Heart right ventricle (tissue), 16 donors: ENCODE measurements at regions of chr16 and their contacts with region 1.

Region 1: DNA sequence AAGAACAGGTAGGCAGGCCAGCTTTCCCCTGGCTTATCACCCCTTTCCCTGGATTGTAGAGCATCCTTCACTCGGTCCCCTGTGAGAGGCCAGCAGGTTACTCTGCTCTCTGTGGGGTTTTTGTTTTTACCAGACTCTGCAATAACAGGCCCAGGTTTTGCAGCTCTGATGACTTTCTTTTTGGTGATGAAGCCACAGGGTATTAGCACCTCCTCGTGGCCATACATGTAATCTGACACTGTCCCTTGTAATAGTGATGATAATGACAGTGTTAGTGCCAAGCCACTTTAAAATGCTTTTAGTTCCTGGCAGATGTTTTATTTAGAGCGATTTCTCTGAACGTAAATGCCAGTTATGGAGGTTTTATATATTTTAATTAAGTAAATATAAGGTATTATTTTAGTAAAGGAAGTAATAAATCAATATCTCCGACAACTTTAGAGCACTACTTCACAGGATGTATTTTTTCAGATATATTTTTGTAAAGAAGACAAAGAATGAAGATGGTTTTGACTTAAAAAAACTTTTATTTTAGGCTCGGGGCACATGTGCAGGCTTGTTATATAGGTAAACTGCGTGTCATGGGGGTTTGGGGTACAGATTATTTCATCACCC is 38.0 kb upstream of the CPHXL start:
- DNase-seq: peak in 1 of 2 donors; percentile 54
- ATAC-seq: peak in 7 of 8 donors; percentile 64 to 97 (median 89)
- H3K4me3 ChIP-seq: no peak overlapping the region
- H3K27ac ChIP-seq: no peak overlapping the region
- H3K4me1 ChIP-seq: peaks cover 0 to 2% (median 0%) of the 10 kb centered on the region in 9 donors
- H3K27me3 ChIP-seq: no peaks in the 10 kb centered on the region
- CTCF ChIP-seq: peak; percentile 68 to 86 (median 83)

Region 2: DNA sequence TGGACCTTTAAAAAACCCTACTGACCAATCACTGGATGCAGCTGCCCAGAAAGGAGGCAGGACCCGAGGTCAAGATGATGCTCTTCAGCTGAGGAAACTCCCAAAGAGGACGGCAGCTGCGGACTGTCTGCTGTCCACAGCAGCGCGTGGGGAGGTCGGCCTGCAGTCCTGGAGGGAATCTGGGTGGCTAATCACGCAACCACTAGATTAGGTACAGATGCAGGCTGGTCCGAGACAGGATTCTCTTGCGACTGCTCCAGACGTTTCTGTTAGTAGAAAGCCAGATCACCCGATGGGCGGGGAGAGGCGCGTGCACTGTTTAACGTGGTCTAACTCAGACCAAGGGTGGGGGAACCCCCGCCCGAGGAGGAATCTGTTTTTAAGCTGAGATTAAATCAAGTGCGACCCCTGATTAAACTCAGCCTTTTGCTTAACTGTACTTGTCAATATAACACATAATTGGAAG is 566.1 kb before region 1 on chr16:
- intact Hi-C with region 1: loop called in 7 of 10 experiments (anchors 2 to 10 kb)
- DNase-seq: no peak
- ATAC-seq: peak in 5 of 8 donors; percentile 14 to 35 (median 20)
- H3K4me3 ChIP-seq: peak overlapping the region in 1 of 10 donors; percentile 16
- H3K27ac ChIP-seq: no peak overlapping the region
- H3K4me1 ChIP-seq: peaks cover 0 to 12% (median 6%) of the 10 kb centered on the region in 9 donors
- H3K27me3 ChIP-seq: peaks cover 0 to 48% (median 13%) of the 10 kb centered on the region in 7 donors
- CTCF ChIP-seq: no peak

Region 3: DNA sequence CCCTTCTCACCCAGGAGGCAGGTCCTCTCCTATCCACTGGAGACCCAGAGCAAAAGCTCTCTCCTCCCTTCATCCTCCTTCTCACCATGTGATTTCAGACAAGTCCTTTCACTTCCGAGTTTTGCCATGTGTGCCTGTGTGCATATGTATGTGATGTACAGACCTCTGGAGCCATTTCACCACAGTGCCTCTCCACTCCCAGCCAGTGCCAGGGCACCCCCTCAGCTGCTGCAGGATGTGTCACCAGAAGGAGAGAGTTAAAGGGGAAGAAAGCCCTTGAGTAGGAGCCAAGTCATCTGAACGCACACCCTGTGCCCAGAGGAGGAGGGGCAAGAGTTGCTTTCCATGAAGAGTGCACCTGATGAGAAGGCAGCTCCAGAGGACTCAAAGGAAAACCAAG is 286.2 kb before region 1 on chr16:
- intact Hi-C with region 1: loop called in 4 of 10 experiments (anchors 5 to 10 kb)
- DNase-seq: no peak
- ATAC-seq: peak in 1 of 8 donors; percentile 15
- H3K4me3 ChIP-seq: no peak overlapping the region
- H3K27ac ChIP-seq: no peak overlapping the region
- H3K4me1 ChIP-seq: no peaks in the 10 kb centered on the region
- H3K27me3 ChIP-seq: no peaks in the 10 kb centered on the region
- CTCF ChIP-seq: no peak

Region 4: GRCh38 chr16:75527825-75528299 is 236.4 kb before region 1 on chr16:
- intact Hi-C with region 1: no loop called
- DNase-seq: no peak
- ATAC-seq: no peak
- H3K4me3 ChIP-seq: no peak overlapping the region
- H3K27ac ChIP-seq: no peak overlapping the region
- H3K4me1 ChIP-seq: no peaks in the 10 kb centered on the region
- H3K27me3 ChIP-seq: no peaks in the 10 kb centered on the region
- CTCF ChIP-seq: no peak

Region 5: DNA sequence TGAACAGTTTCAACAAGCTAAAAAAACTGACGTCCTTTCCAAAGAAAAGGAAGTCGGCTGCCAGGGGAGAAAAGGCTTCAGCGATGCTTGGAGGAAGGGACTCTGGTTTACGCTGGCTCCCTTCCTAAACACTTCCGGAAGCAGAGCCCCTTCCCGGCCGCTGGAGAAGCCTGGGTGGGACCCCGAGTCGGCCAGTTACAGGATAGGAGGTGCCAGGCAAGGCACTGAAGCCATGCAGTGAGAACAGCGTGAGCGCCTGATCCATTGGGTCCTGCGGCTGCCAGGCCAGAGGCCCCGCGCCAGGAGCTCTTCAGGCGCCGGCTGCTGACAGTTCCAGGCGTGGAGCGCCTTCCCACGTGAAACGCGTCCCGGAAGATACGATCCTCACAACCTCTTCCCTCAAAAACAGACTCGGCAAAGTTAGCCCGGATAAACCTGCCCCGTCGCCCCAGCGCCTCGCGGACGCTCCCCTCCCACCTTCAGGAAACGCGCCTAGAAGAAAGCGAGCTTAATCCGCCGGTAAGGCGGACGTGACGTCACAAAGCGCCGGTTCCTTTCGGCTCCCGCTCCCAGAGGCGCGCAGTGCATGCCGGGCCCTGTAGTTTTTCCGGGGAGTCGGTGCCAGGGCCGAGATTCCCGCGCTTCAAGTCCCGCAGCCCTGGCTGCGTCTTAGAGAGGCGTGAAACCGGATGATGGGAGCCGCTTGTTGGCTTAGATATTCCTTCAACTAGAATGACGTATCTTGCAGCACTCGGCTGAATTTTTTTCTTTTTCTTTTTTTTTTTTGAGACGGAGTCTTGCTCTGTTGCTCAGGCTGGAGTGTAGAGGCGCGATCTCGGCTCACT is 141.3 kb before region 1 on chr16 and contains the start of gene ADAT1:
- intact Hi-C with region 1: loop called in 2 of 10 experiments (anchors 5 to 10 kb)
- DNase-seq: peak; percentile 97 to 98
- ATAC-seq: peak; percentile 97 to 99 (median 98)
- H3K4me3 ChIP-seq: peak within 1 kb of the TSS; percentile 57 to 90 (median 72)
- H3K27ac ChIP-seq: peak within 1 kb of the TSS; percentile 53 to 98 (median 92)
- H3K4me1 ChIP-seq: peaks cover 0 to 39% (median 24%) of the 10 kb centered on the region in 9 donors
- H3K27me3 ChIP-seq: no peaks in the 10 kb centered on the region
- CTCF ChIP-seq: peak in 1 of 9 donors; percentile 15
- total RNA-seq, gene ADAT1: 14.3 to 30.6 (median 23.3) TPM

Region 6: GRCh38 chr16:75647492-75648264 is 116.6 kb before region 1 on chr16 and contains the starts of genes KARS1 and TERF2IP:
- intact Hi-C with region 1: loop called in 5 of 10 experiments (anchors 5 to 10 kb)
- DNase-seq: peak; percentile 92 to 93
- ATAC-seq: peak; percentile 97 to 98 (median 98)
- H3K4me3 ChIP-seq: peak within 1 kb of the TSS; percentile 62 to 100 (median 96)
- H3K27ac ChIP-seq: peak within 1 kb of the TSS; percentile 90 to 99 (median 98)
- H3K4me1 ChIP-seq: peaks cover 0 to 65% (median 60%) of the 10 kb centered on the region in 9 donors
- H3K27me3 ChIP-seq: no peaks in the 10 kb centered on the region
- CTCF ChIP-seq: no peak
- total RNA-seq, gene KARS1: 123 to 145 (median 129) TPM
- total RNA-seq, gene TERF2IP: 49.1 to 79.3 (median 64.5) TPM

Region 7: DNA sequence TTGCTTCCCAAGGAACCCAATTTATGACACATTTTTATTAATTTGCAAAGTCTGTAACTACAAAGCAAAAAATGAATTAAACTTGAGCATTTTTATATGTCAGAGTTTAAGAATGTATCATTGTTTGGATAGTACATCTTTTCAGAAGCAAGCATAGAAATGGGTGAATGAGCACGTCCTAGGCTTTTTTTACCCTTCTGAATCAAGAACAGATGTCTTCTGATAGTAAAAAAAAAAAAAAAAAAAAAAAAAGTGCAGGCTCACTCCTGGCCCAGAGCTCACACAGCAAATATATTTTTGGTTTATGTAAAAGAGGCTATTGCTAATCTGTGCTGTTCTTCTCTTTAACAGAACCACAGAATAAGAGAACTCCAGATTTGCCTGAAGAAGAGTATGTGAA is 110.3 kb before region 1 on chr16:
- intact Hi-C with region 1: loop called in 5 of 10 experiments (anchors 5 to 10 kb)
- DNase-seq: no peak
- ATAC-seq: no peak
- H3K4me3 ChIP-seq: no peak overlapping the region
- H3K27ac ChIP-seq: no peak overlapping the region
- H3K4me1 ChIP-seq: peaks cover 0 to 70% (median 46%) of the 10 kb centered on the region in 9 donors
- H3K27me3 ChIP-seq: no peaks in the 10 kb centered on the region
- CTCF ChIP-seq: no peak

Region 8: GRCh38 chr16:75660726-75661302 is 103.4 kb before region 1 on chr16:
- intact Hi-C with region 1: loop called in 4 of 10 experiments (anchors 5 to 10 kb)
- DNase-seq: no peak
- ATAC-seq: peak in 3 of 8 donors; percentile 25 to 52 (median 32)
- H3K4me3 ChIP-seq: no peak overlapping the region
- H3K27ac ChIP-seq: peak overlapping the region in 2 of 10 donors; percentile 33
- H3K4me1 ChIP-seq: peaks cover 0 to 32% (median 13%) of the 10 kb centered on the region in 9 donors
- H3K27me3 ChIP-seq: no peaks in the 10 kb centered on the region
- CTCF ChIP-seq: no peak